PC-3 (cell line): ENCODE measurements at regions of chr19 and their contacts with region 1.

Region 1: GRCh38 chr19:33376423-33376822 is 2.9 kb downstream of the CEBPG start:
- DNase-seq: peak; percentile 81
- ATAC-seq: peak; percentile 27
- H3K4me3 ChIP-seq: peak overlapping the region; percentile 95
- H3K27ac ChIP-seq: peak overlapping the region; percentile 77
- H3K4me1 ChIP-seq: peaks cover 30% of the 10 kb centered on the region
- H3K27me3 ChIP-seq: no peaks in the 10 kb centered on the region
- CTCF ChIP-seq: no peak

Region 2: GRCh38 chr19:33302175-33302973 is 74.0 kb before region 1 on chr19 and contains the start of gene CEBPA:
- CTCF ChIA-PET with region 1: no interaction called
- POLR2A ChIA-PET with region 1: no interaction called
- intact Hi-C with region 1: loop called (anchors 5 kb)
- DNase-seq: peak; percentile 74
- ATAC-seq: peak; percentile 85
- H3K4me3 ChIP-seq: peak within 1 kb of the TSS; percentile 71
- H3K27ac ChIP-seq: no peak within 1 kb of the TSS
- H3K4me1 ChIP-seq: peaks cover 5% of the 10 kb centered on the region; the same call in 1 of the 2 replicates
- H3K27me3 ChIP-seq: peaks cover 11% of the 10 kb centered on the region
- CTCF ChIP-seq: no peak; the same call in 1 of the 2 replicates
- total RNA-seq, gene CEBPA: 2.9 and 6.3 TPM in 2 replicates

Region 3: GRCh38 chr19:33832633-33833032 is 456.2 kb after region 1 on chr19:
- CTCF ChIA-PET with region 1: no interaction called
- POLR2A ChIA-PET with region 1: interaction called, 12 read pairs
- intact Hi-C with region 1: no loop called
- DNase-seq: no peak
- ATAC-seq: no peak
- H3K4me3 ChIP-seq: no peak overlapping the region
- H3K27ac ChIP-seq: no peak overlapping the region
- H3K4me1 ChIP-seq: no peaks in the 10 kb centered on the region; the same call in 1 of the 2 replicates
- H3K27me3 ChIP-seq: no peaks in the 10 kb centered on the region
- CTCF ChIP-seq: no peak